SK-N-SH (cell line): ENCODE measurements at regions of chr10 and their contacts with region 1.

Region 1: DNA sequence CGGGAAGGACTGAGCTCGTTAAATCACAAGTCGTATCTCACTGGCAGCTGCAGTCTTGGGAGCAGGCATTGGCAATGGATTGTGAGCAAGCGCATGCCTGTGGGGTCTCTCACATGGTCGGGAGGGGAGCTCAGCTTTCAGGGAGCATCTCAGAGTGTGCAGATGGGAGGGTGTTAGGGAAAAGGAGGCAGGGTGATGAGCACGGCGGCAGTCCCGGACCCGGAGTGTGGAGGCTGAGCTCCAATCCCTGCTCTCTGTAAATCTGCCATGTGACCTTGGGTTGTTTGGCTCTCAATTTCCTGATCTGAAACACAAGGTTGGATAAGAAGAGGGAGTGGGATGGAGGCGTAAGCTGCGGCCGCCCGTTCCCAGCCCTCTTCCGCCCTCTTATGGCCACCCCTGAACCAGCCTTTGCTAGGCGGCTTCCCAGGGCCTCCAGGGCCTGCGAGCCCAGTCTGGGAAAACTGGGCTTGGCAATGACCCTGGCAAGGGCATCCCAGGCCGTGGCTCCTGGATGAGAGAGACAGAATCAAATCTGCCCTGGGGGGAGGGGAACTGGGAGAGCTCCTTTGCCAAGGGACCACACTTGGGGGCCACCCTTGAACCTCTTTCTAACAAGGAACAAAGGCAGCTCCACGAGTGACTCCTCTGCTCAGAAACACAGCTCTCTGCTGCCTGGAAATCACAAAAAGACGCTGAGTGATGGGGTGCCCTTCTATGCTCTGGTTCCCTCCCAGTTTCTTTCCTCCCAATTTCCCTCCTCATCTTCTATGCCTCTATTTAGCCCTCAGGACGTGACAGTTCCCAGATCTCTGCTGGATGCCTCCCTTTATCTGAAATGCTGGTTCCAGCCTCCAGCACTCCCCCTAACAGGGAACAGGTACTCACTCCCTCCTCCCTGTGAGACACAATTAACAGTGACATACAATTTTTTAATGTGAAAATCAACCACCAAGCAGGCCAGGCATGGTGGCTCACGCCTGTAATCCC is 41.7 kb upstream of the LOXL4 start:
- DNase-seq: peak; percentile 89
- H3K4me3 ChIP-seq: peak overlapping the region; percentile 32 to 34
- H3K27ac ChIP-seq: peak overlapping the region in 1 of 2 experiments; percentile 72; a peak in 2 of 4 replicates
- H3K4me1 ChIP-seq: peaks cover 0 to 23% of the 10 kb centered on the region in 2 experiments; a peak in 1 of 4 replicates
- H3K27me3 ChIP-seq: no peaks in the 10 kb centered on the region
- CTCF ChIP-seq: peak; percentile 83
- EP300 ChIP-seq: no peak
- RAD21 ChIP-seq: peak; percentile 97

Region 2: GRCh38 chr10:97914837-97915211 is 394.8 kb before region 1 on chr10:
- CTCF ChIA-PET with region 1: interaction called, 30 read pairs
- POLR2A ChIA-PET with region 1: no interaction called
- DNase-seq: peak; percentile 92
- H3K4me3 ChIP-seq: peak overlapping the region in 1 of 2 experiments; percentile 50; a peak in 1 of 4 replicates
- H3K27ac ChIP-seq: no peak overlapping the region
- H3K4me1 ChIP-seq: peaks cover 0 to 6% of the 10 kb centered on the region in 2 experiments; a peak in 1 of 4 replicates
- H3K27me3 ChIP-seq: no peaks in the 10 kb centered on the region; the same call in none of the 2 replicates
- CTCF ChIP-seq: peak; percentile 93
- EP300 ChIP-seq: no peak
- RAD21 ChIP-seq: peak; percentile 93

Region 3: GRCh38 chr10:98016772-98017475 is 292.7 kb before region 1 on chr10:
- CTCF ChIA-PET with region 1: no interaction called
- POLR2A ChIA-PET with region 1: no interaction called
- DNase-seq: no peak
- H3K4me3 ChIP-seq: no peak overlapping the region
- H3K27ac ChIP-seq: no peak overlapping the region
- H3K4me1 ChIP-seq: no peaks in the 10 kb centered on the region
- H3K27me3 ChIP-seq: no peaks in the 10 kb centered on the region
- CTCF ChIP-seq: no peak
- EP300 ChIP-seq: no peak
- RAD21 ChIP-seq: no peak

Region 4: GRCh38 chr10:98125940-98126631 is 183.6 kb before region 1 on chr10:
- CTCF ChIA-PET with region 1: no interaction called
- POLR2A ChIA-PET with region 1: no interaction called
- DNase-seq: no peak
- H3K4me3 ChIP-seq: no peak overlapping the region
- H3K27ac ChIP-seq: no peak overlapping the region
- H3K4me1 ChIP-seq: no peaks in the 10 kb centered on the region
- H3K27me3 ChIP-seq: no peaks in the 10 kb centered on the region; the same call in 1 of the 2 replicates
- CTCF ChIP-seq: no peak
- EP300 ChIP-seq: no peak
- RAD21 ChIP-seq: no peak

Region 5: GRCh38 chr10:98170249-98171117 is 139.2 kb before region 1 on chr10:
- CTCF ChIA-PET with region 1: interaction called, 80 read pairs
- POLR2A ChIA-PET with region 1: interaction called, 4 read pairs
- DNase-seq: peak; percentile 43
- H3K4me3 ChIP-seq: no peak overlapping the region
- H3K27ac ChIP-seq: no peak overlapping the region
- H3K4me1 ChIP-seq: no peaks in the 10 kb centered on the region
- H3K27me3 ChIP-seq: no peaks in the 10 kb centered on the region
- CTCF ChIP-seq: peak; percentile 81
- EP300 ChIP-seq: no peak
- RAD21 ChIP-seq: peak; percentile 70

Region 6: GRCh38 chr10:98242823-98243222 is 66.8 kb before region 1 on chr10:
- CTCF ChIA-PET with region 1: interaction called, 95 read pairs
- POLR2A ChIA-PET with region 1: no interaction called
- DNase-seq: peak; percentile 29
- H3K4me3 ChIP-seq: no peak overlapping the region; a peak in 1 of 4 replicates
- H3K27ac ChIP-seq: no peak overlapping the region
- H3K4me1 ChIP-seq: 0 out of 4 replicates have a peak, but pooled peaks cover 0 to 6% of the 10 kb centered on the region in 2 experiments
- H3K27me3 ChIP-seq: no peaks in the 10 kb centered on the region
- CTCF ChIP-seq: peak; percentile 69
- EP300 ChIP-seq: no peak
- RAD21 ChIP-seq: peak; percentile 85

Region 7: GRCh38 chr10:98262571-98262970 is 47.1 kb before region 1 on chr10:
- CTCF ChIA-PET with region 1: interaction called, 64 read pairs
- POLR2A ChIA-PET with region 1: interaction called, 10 read pairs
- DNase-seq: peak; percentile 48
- H3K4me3 ChIP-seq: no peak overlapping the region
- H3K27ac ChIP-seq: no peak overlapping the region
- H3K4me1 ChIP-seq: peaks cover 0 to 5% of the 10 kb centered on the region in 2 experiments; a peak in 1 of 4 replicates
- H3K27me3 ChIP-seq: no peaks in the 10 kb centered on the region
- CTCF ChIP-seq: peak; percentile 36; the same call in 1 of the 2 replicates
- EP300 ChIP-seq: no peak
- RAD21 ChIP-seq: peak; percentile 47

Region 8: DNA sequence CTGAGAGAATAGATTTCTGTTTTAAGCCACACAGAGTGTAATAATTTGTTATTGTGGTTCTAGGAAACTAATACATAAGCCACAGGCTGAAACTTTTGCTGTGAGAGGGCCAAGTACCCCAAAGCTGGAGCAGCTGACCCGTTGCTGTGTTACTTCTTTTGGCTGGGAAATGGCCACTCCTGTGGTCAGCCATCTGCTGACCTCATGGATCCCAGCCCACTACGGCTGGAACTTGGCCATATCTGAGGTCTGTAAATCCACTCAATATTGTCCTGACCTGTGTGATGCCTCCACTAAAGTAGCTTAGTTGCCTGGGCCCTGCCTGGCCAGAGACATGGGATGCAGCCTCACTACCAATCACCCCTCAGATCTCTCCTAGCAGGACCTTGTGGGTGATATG is 24.2 kb before region 1 on chr10:
- CTCF ChIA-PET with region 1: interaction called, 43 read pairs
- POLR2A ChIA-PET with region 1: no interaction called
- DNase-seq: no peak
- H3K4me3 ChIP-seq: no peak overlapping the region
- H3K27ac ChIP-seq: no peak overlapping the region
- H3K4me1 ChIP-seq: peaks cover 0 to 8% of the 10 kb centered on the region in 2 experiments; a peak in 1 of 4 replicates
- H3K27me3 ChIP-seq: peaks cover 5% of the 10 kb centered on the region; the same call in 1 of the 2 replicates
- CTCF ChIP-seq: no peak
- EP300 ChIP-seq: no peak
- RAD21 ChIP-seq: no peak

Region 9: DNA sequence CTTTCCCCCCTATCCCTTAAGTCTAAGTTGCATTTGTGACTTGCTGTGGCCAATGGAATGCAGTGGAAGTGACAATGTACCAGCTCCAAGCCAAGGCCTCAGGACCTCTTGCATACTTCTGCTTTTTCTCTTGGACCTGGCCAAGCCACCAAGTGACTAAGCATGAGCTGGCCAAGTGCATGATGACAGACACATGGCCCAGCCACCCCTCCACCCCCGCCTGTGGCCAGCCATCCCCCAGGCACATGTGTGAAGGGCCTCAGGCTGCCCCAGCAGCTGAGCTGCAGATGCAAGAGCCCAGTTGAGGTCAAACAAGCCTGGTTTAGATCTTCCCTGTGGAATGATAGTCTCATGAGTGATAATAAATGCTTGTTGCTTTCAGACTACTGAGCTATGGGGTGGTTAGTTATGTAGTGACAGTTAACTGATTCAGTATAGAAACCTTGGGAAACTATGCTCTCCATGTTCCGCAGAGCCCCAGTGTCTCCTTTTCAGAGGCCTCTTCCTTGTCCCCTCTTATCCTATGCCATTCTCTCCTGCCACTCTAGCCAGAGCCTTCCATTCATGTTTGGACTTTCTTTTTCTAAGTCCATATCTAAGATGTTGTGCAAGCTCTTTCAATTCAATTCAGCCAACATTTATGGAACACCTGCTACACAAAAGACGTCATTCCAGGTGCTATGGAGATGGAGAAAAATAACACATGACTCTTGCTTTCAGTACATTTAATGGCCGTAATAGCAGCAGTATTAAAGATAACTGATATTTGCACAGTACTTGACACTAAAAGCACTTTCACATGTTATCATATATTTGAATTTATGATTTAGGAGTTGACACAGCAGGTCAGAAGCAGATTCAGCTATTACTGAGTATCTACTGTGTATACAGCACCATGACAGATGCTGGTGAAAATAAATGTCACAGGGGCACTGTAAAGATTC is 13.8 kb after region 1 on chr10:
- CTCF ChIA-PET with region 1: interaction called, 35 read pairs
- POLR2A ChIA-PET with region 1: interaction called, 3 read pairs
- DNase-seq: no peak
- H3K4me3 ChIP-seq: no peak overlapping the region
- H3K27ac ChIP-seq: peak overlapping the region in 1 of 2 experiments; percentile 34; a peak in 2 of 4 replicates
- H3K4me1 ChIP-seq: peaks cover 5 to 16% of the 10 kb centered on the region in 2 experiments; a peak in 1 of 4 replicates
- H3K27me3 ChIP-seq: no peaks in the 10 kb centered on the region
- CTCF ChIP-seq: no peak
- EP300 ChIP-seq: peak in 1 of 2 experiments; percentile 80; a peak in 2 of 4 replicates
- RAD21 ChIP-seq: no peak